Activated CD4-positive, alpha-beta T cell treated with anti-CD3 and anti-CD28 coated beads, Interleukin-2, amount 10 ng/mL, durations not matched to agents 24 days and 14 days (primary cell): ENCODE measurements at regions of chrX and their contacts with region 1.

Region 1: DNA sequence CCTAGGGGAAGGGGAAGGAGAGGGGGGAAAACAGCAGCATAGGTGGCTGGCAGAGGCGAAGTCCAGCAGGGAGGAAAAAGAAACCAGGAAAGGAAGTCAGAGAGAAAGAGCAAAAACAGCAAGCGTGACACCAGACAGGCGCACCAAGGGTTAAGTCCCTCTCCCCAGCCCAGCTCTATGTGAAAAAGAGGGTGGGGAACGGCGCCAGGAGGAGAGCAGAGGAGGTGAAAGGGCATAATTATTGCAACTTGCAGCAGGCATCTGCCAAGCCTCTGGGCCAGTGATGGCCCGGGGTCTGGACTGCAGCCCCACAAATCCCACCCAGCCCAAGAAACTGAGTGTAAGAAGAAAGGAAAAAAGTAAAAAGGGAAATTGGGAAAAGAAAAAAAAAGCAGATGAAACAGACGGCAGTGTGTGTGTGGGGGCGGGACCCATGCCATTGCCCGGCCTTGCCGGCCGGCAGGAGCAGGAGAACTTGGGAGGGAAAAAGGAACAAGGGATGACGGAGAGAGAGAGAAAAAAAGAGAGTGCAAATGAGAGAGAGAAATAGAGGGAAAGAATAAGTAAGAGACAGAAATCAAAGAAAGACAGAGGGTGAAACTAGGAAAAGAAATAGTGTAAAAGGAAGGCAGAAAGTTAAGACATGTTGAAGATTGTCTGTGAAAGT is 14.1 kb upstream of the RHOXF2 start:
- DNase-seq: no peak
- H3K4me3 Mint-ChIP-seq: peak overlapping the region; percentile 42
- H3K27ac Mint-ChIP-seq: peak overlapping the region; percentile 6
- H3K4me1 Mint-ChIP-seq: peaks cover 22% of the 10 kb centered on the region
- H3K27me3 Mint-ChIP-seq: no peaks in the 10 kb centered on the region

Region 2: GRCh38 chrX:119981286-119982070 is 162.8 kb before region 1 on chrX:
- intact Hi-C with region 1: loop called (anchors 10 kb)
- DNase-seq: peak; percentile 59
- H3K4me3 Mint-ChIP-seq: no peak overlapping the region
- H3K27ac Mint-ChIP-seq: no peak overlapping the region
- H3K4me1 Mint-ChIP-seq: no peaks in the 10 kb centered on the region
- H3K27me3 Mint-ChIP-seq: peaks cover 11% of the 10 kb centered on the region

Region 3: DNA sequence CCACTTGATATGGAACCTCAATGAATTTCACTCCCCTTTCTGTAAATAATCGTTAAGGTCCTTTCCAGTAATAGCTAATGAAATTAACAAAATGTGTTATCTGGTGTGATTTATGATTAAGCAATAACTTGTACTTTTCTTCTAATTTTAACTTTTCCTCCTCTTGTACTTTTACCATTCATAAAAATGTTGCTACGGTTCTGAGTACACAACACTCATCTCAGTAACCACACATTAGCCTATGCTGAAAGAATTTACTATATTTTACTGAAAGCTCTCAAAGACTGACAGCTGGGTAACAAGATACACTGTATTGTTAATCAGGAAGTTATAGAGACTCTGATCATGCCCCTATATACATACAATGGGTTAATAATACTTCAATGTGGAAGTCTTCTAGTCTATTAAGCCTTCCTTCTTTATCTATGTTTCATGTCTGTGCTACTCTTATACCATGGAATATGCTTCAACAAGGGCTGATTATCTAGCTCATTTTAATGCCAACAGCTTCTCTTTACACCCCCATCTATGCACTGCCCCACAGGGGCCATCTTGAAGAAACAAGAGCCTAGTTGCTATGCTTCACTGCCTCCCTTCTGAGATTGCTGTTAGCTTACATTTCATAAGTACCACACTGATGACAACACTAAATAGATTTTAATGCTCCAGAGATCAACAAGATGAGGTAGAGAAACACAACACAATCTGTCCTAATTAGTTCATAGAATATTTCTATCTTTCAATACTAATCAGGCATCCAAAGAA is 285.6 kb after region 1 on chrX:
- intact Hi-C with region 1: no loop called
- DNase-seq: no peak
- H3K4me3 Mint-ChIP-seq: no peak overlapping the region
- H3K27ac Mint-ChIP-seq: no peak overlapping the region
- H3K4me1 Mint-ChIP-seq: peaks cover 4% of the 10 kb centered on the region
- H3K27me3 Mint-ChIP-seq: no peaks in the 10 kb centered on the region